ENCODE measurements at regions of chr19 and their contacts with region 1.

Region 1: GRCh38 chr19:18349524-18350128 is 9.2 kb downstream of the PGPEP1 start:
- DNase-seq: peak; percentile 40
- ATAC-seq: peak; percentile 67
- H3K4me3 ChIP-seq: no peak overlapping the region
- H3K27ac ChIP-seq: no peak overlapping the region
- H3K4me1 ChIP-seq: peaks cover 18% of the 10 kb centered on the region; the same call in 1 of the 2 replicates
- H3K27me3 ChIP-seq: no peaks in the 10 kb centered on the region
- CTCF ChIP-seq: peak; percentile 83
- EP300 ChIP-seq: no peak
- POLR2A ChIP-seq: no peak
- RAD21 ChIP-seq: peak; percentile 81

Region 2: DNA sequence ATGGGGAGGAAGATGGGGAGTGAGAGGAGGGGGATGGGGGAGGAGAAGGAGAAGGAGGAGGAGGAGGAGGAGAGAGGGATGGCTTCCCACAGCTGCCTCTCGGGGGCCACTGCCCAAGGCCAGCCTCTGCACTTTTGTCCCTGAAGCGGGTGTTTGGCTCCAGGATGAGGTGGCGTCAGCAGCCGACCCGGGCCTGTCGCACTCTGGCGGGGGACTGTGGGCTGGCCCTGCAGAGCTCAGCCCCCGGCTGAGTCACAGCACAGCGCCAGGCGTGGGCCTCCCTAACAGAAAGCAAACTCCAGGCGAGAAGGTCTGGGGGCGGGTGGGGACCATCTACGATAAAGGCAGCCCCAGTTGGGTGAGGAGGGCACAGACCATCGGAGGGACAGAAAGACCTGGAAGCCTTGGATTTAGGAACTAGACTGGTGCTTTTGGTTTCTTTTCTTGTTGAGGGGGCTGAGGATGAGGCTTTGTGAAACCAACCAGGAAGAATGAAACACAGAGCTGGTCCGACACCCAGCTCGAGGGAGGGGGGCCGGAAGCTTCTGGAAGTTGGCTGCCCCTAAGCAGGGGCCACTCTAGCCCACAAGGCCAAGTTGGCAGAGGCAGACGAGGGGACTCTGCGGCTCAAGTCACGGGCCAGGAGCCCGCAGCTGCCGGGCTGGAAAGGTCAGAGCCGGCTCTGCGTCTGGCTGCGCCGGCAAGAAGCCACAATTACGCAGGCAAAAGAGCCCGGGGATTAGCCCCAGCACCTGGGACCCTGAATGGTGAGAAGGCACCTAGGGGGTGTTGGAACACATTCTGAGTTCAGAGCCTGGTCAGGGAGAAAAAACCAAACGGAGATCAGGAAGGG is 44.9 kb before region 1 on chr19:
- CTCF ChIA-PET with region 1: no interaction called
- POLR2A ChIA-PET with region 1: no interaction called
- in situ Hi-C with region 1: no loop called
- intact Hi-C with region 1: no loop called
- DNase-seq: peak; percentile 80
- ATAC-seq: peak; percentile 87
- H3K4me3 ChIP-seq: peak overlapping the region; percentile 60 to 77 (median 61)
- H3K27ac ChIP-seq: peak overlapping the region; percentile 86
- H3K4me1 ChIP-seq: peaks cover 56% of the 10 kb centered on the region
- H3K27me3 ChIP-seq: no peaks in the 10 kb centered on the region
- CTCF ChIP-seq: peak; percentile 61
- EP300 ChIP-seq: peak in 1 of 2 experiments; percentile 35; a peak in 1 of 4 replicates
- POLR2A ChIP-seq: peak; percentile 70 to 72
- RAD21 ChIP-seq: no peak

Region 3: GRCh38 chr19:18401580-18402112 is 52.0 kb after region 1 on chr19:
- CTCF ChIA-PET with region 1: interaction called, 6 read pairs
- POLR2A ChIA-PET with region 1: no interaction called
- in situ Hi-C with region 1: loop called (anchors 10 kb)
- intact Hi-C with region 1: loop called (anchors 5 kb)
- DNase-seq: peak; percentile 76
- ATAC-seq: peak; percentile 76
- H3K4me3 ChIP-seq: peak overlapping the region; percentile 28 to 63 (median 35); a peak in 5 of 6 replicates
- H3K27ac ChIP-seq: no peak overlapping the region
- H3K4me1 ChIP-seq: peaks cover 54% of the 10 kb centered on the region
- H3K27me3 ChIP-seq: peaks cover 0 to 17% of the 10 kb centered on the region in 2 experiments; a peak in 4 of 5 replicates
- CTCF ChIP-seq: peak; percentile 63
- EP300 ChIP-seq: 0 out of 4 replicates have a peak, but pooled peaks of 1 of the 2 experiments have one; percentile 14
- POLR2A ChIP-seq: no peak
- RAD21 ChIP-seq: 0 out of 2 replicates have a peak, but pooled peaks have one; percentile 28

Region 4: DNA sequence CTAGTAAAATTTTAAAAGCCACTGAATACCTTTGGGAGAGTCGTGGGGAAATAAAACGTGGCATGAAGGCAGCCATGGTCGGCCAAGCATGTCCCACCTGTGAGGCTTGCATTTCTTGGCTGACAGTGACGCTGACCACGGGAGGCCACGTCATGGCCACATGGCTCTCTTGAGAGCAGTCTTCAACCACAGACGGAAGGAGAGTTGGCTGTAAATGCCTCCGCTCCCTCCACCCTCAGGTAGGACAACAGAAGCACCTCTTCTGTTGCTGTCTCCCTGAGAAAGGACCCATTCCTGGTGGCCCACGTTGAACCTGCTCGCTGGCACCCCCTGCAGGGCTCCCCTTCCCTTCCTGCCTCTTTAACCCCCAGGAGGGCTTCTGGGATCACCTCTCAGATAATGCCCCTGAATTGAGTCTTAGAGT is 58.4 kb after region 1 on chr19:
- CTCF ChIA-PET with region 1: interaction called, 31 read pairs
- POLR2A ChIA-PET with region 1: interaction called, 5 read pairs
- in situ Hi-C with region 1: loop called (anchors 10 kb)
- intact Hi-C with region 1: loop called (anchors 2 kb)
- DNase-seq: no peak
- ATAC-seq: peak; percentile 62
- H3K4me3 ChIP-seq: no peak overlapping the region
- H3K27ac ChIP-seq: no peak overlapping the region
- H3K4me1 ChIP-seq: peaks cover 38% of the 10 kb centered on the region
- H3K27me3 ChIP-seq: no peaks in the 10 kb centered on the region
- CTCF ChIP-seq: peak; percentile 77
- EP300 ChIP-seq: no peak
- POLR2A ChIP-seq: no peak
- RAD21 ChIP-seq: peak; percentile 61; the same call in 1 of the 2 replicates

Measured in HepG2 (cell line).